ENCODE measurements at regions of chr7 and their contacts with region 1.

Region 1: DNA sequence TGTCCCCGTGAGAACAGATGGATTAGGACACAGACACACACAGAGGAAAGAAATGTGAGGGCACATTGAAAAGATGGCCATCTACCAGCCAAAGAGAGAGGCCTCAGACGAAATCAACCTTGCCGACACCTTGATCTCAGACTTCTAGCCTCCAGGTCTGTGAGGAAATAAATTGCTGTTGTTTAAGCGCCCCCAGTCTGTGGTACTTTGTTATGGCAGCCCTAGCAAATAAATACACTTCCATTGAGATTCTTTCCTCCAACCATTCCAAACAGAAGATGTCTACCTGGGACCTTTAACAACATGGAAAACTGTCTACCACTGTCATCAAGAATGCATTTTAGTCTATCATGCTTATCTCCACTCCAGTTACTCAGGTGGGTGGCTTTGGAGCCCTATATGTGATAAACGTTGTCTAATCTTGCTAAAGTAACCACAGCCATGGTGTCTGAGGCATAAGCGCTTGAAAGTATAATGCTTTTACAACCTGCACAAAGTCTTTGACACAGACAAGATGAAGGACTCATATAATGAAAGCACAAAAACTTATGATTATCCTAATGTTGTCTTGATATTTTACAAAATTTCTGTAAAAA is 244.3 kb downstream of the MTERF1 start:
- DNase-seq: no peak
- ATAC-seq: peak; percentile 18 to 40
- H3K4me3 ChIP-seq: no peak overlapping the region
- H3K27ac ChIP-seq: no peak overlapping the region
- H3K4me1 ChIP-seq: no peaks in the 10 kb centered on the region
- H3K27me3 ChIP-seq: no peaks in the 10 kb centered on the region

Region 2: GRCh38 chr7:91089382-91089963 is 546.8 kb before region 1 on chr7:
- intact Hi-C with region 1: loop called in 3 of 4 experiments (anchors 10 kb)
- DNase-seq: no peak
- ATAC-seq: peak; percentile 46 to 62
- H3K4me3 ChIP-seq: peak overlapping the region; percentile 69
- H3K27ac ChIP-seq: peak overlapping the region; percentile 67
- H3K4me1 ChIP-seq: peaks cover 2% of the 10 kb centered on the region
- H3K27me3 ChIP-seq: no peaks in the 10 kb centered on the region

Region 3: GRCh38 chr7:91288208-91288824 is 347.9 kb before region 1 on chr7:
- intact Hi-C with region 1: loop called in 1 of 4 experiments (anchors 10 kb)
- DNase-seq: peak in 2 of 3 donors; percentile 50 to 75
- ATAC-seq: peak; percentile 48 to 63
- H3K4me3 ChIP-seq: no peak overlapping the region
- H3K27ac ChIP-seq: no peak overlapping the region
- H3K4me1 ChIP-seq: no peaks in the 10 kb centered on the region
- H3K27me3 ChIP-seq: no peaks in the 10 kb centered on the region

Region 4: GRCh38 chr7:91527460-91527859 is 108.8 kb before region 1 on chr7:
- intact Hi-C with region 1: no loop called
- DNase-seq: no peak
- ATAC-seq: no peak
- H3K4me3 ChIP-seq: no peak overlapping the region
- H3K27ac ChIP-seq: no peak overlapping the region
- H3K4me1 ChIP-seq: no peaks in the 10 kb centered on the region
- H3K27me3 ChIP-seq: no peaks in the 10 kb centered on the region

Region 5: GRCh38 chr7:91683823-91684222 is 47.6 kb after region 1 on chr7:
- intact Hi-C with region 1: no loop called
- DNase-seq: no peak
- ATAC-seq: peak; percentile 34 to 75
- H3K4me3 ChIP-seq: no peak overlapping the region
- H3K27ac ChIP-seq: no peak overlapping the region
- H3K4me1 ChIP-seq: no peaks in the 10 kb centered on the region
- H3K27me3 ChIP-seq: no peaks in the 10 kb centered on the region

Region 6: GRCh38 chr7:91784463-91784862 is 148.2 kb after region 1 on chr7:
- intact Hi-C with region 1: loop called in 1 of 4 experiments (anchors 10 kb)
- DNase-seq: no peak
- ATAC-seq: no peak
- H3K4me3 ChIP-seq: no peak overlapping the region
- H3K27ac ChIP-seq: no peak overlapping the region
- H3K4me1 ChIP-seq: no peaks in the 10 kb centered on the region
- H3K27me3 ChIP-seq: no peaks in the 10 kb centered on the region

Measured in right cardiac atrium (tissue), 5 donors.